Heart left ventricle (tissue), 16 donors: ENCODE measurements at regions of chr3 and their contacts with region 1.

Region 1: DNA sequence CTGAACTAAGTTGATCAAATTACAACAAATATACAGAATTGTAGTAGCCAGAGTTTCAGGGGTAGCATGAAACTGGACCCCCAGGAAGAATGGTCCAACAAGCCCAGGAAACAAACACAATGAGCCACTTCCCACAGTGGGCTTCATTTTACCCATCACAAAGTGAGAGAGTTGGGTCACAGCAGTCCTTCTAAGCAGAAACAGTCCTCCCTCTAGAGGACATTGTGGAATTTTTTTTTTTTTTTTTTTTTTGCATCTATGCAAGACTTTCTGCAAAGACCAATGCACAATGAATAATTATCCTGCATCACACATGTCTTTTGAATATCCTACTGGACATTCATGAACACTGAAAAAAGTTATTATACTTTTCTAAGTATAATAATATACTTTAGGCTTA is 73.8 kb upstream of the ATP13A5 start:
- DNase-seq: no peak
- ATAC-seq: no peak
- H3K4me3 ChIP-seq: no peak overlapping the region
- H3K27ac ChIP-seq: no peak overlapping the region
- H3K4me1 ChIP-seq: no peaks in the 10 kb centered on the region
- H3K27me3 ChIP-seq: no peaks in the 10 kb centered on the region
- CTCF ChIP-seq: peak in 10 of 12 donors; percentile 7 to 43 (median 27)
- POLR2A ChIP-seq: no peak

Region 2: DNA sequence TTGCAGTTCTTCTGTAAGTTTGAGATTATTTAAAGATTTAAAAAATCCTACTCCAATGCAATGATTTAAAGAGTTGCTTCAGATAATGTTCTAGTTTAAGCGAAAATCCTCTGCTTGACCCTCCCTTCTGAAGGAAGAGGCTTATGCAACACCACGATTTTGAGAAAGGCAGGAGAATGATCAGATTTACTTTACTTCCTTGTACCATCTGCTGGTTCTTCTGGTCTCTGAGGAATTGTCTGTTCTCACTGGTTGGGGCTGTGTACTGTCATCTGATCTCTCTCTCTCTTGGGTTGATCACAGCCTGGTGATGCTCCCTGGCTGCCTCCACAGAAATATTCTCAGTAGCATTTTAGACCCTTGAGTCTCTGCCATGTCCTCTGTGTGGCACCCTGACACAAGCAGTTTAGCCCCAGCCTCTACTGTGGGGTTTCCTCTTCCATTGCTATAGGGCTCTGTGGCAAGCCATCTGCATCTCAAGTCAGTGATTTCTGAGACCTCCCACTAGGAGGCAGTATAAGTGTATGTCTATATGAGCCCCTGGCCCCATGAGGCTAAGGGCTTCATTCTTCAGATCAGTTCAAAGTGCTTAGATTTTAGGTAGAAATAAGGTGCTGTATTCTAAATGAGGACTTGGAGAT is 262.1 kb before region 1 on chr3:
- intact Hi-C with region 1: loop called in 1 of 10 experiments (anchors 5 kb)
- DNase-seq: no peak
- ATAC-seq: peak in 2 of 4 donors; percentile 38 to 43
- H3K4me3 ChIP-seq: no peak overlapping the region
- H3K27ac ChIP-seq: no peak overlapping the region
- H3K4me1 ChIP-seq: no peaks in the 10 kb centered on the region
- H3K27me3 ChIP-seq: no peaks in the 10 kb centered on the region
- CTCF ChIP-seq: peak; percentile 13 to 48 (median 33)
- POLR2A ChIP-seq: no peak

Region 3: DNA sequence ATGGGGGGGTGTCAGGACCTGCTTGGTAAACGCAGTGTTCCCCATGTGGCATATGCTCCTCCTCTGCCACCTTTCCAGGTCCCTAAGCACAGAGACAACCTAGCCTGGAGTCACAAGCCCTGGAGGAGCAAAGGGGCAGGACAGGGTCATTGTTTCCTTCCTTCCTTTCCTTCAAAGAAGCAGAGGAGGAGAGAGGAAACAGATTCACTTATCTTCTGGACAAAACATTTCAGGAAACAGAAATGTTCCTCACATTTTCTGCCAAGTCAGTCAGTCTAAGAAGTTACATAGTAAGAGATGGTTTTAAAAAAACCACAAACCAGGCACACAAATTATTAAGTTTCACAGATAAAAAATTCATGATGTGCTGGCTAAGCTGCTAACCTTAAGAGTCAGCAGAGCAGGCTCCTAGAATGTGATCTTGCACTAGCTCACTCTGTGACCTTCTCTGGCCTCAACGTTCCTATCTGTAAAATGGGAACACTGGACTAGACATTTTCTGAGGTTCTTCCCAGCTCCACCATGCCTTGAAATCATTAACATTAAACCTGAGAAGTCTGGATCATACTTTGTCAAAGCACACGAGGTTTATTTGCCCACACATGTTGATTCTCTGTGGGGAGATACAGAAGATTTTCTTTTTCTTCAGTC is 121.7 kb before region 1 on chr3:
- intact Hi-C with region 1: no loop called
- DNase-seq: no peak
- ATAC-seq: no peak
- H3K4me3 ChIP-seq: no peak overlapping the region
- H3K27ac ChIP-seq: no peak overlapping the region
- H3K4me1 ChIP-seq: peaks cover 0 to 5% (median 0%) of the 10 kb centered on the region in 12 donors
- H3K27me3 ChIP-seq: no peaks in the 10 kb centered on the region
- CTCF ChIP-seq: no peak
- POLR2A ChIP-seq: no peak

Region 4: DNA sequence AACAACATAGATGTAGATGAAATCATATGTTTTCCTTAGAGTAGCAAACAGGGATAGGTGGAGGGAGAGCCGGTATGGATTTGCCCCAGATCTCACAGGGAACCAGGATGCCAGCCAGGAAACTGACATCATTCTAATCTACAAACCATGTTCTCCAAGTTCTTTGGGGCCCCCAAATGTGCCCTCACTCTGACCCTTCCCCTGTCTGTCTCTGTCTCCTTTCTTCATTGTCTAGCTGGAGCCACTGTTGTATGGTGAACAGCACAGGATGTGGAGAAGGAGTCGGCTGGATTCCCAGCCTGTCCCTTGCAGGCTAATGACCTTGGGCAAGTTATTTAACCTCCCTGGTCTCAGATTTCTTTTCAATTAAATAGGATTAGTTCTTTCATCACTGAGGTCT is 74.7 kb before region 1 on chr3:
- intact Hi-C with region 1: no loop called
- DNase-seq: no peak
- ATAC-seq: no peak
- H3K4me3 ChIP-seq: no peak overlapping the region
- H3K27ac ChIP-seq: no peak overlapping the region
- H3K4me1 ChIP-seq: no peaks in the 10 kb centered on the region
- H3K27me3 ChIP-seq: no peaks in the 10 kb centered on the region
- CTCF ChIP-seq: no peak
- POLR2A ChIP-seq: no peak